ENCODE measurements at regions of chr1 and their contacts with region 1.

Region 1: GRCh38 chr1:169809370-169810095 is 14.8 kb upstream of the METTL18 start:
- DNase-seq: no peak
- ATAC-seq: no peak
- H3K4me3 ChIP-seq: no peak overlapping the region
- H3K27ac ChIP-seq: no peak overlapping the region
- H3K4me1 ChIP-seq: no peaks in the 10 kb centered on the region
- H3K27me3 ChIP-seq: no peaks in the 10 kb centered on the region

Region 2: GRCh38 chr1:169546087-169546995 is 263.2 kb before region 1 on chr1:
- intact Hi-C with region 1: loop called in 1 of 2 experiments (anchors 2 kb)
- DNase-seq: no peak
- ATAC-seq: peak; percentile 81
- H3K4me3 ChIP-seq: no peak overlapping the region
- H3K27ac ChIP-seq: no peak overlapping the region
- H3K4me1 ChIP-seq: no peaks in the 10 kb centered on the region
- H3K27me3 ChIP-seq: no peaks in the 10 kb centered on the region

Region 3: GRCh38 chr1:169601093-169601881 is 208.2 kb before region 1 on chr1:
- intact Hi-C with region 1: loop called (anchors 5 kb)
- DNase-seq: no peak
- ATAC-seq: no peak
- H3K4me3 ChIP-seq: no peak overlapping the region
- H3K27ac ChIP-seq: no peak overlapping the region
- H3K4me1 ChIP-seq: no peaks in the 10 kb centered on the region
- H3K27me3 ChIP-seq: peaks cover 0 to 1% of the 10 kb centered on the region in 2 donors

Region 4: DNA sequence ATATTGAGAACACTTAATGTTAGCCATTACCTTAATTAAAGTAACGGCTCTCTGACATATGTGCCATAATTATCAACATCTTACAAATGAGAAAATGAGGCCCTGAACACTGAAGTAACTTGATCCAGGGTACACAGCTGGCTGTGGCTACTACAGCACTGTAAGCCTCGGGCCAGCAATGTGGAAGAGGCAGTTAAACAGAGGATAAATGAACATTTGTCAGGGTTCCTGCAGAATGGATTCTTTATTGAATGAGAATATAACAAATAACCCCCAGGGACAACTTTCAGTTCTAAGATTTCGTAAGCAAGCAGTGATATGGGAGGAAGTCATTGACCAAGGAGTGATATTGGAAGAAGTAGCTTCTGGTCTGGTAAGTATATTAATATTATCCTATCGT is 154.7 kb after region 1 on chr1:
- intact Hi-C with region 1: no loop called
- DNase-seq: no peak
- ATAC-seq: no peak
- H3K4me3 ChIP-seq: no peak overlapping the region
- H3K27ac ChIP-seq: no peak overlapping the region
- H3K4me1 ChIP-seq: no peaks in the 10 kb centered on the region
- H3K27me3 ChIP-seq: no peaks in the 10 kb centered on the region